ENCODE measurements at regions of chr14 and their contacts with region 1.

Region 1: DNA sequence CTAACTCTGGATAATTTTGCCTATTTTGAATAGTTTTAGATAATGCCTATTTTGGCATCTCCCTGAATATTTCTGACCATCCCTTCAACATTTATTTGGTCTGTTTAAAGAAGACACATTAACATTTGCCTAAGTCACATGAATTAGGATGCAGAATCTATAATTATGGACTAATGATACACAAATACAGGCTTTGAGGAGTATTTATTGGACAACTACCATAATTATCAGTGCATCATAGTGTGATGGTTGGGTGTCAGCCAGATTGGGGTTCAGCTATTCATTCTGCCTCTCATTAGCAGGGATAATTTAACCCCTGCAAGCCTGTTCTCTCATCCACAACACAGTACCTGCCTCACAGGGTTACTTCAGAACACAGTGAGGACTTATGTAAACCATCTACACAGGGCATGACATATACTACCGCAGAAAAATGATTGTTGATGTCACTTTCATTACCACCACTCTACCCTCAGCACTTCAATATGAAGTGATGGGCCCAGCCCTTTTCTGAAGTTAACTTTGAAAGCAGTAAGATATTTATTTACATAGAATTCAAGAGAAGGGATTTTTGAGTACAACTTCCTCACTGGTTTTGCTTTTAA is 14.4 kb downstream of the PRKCH start:
- DNase-seq: no peak
- ATAC-seq: peak; percentile 63
- H3K4me3 Mint-ChIP-seq: peak overlapping the region; percentile 60
- H3K27ac Mint-ChIP-seq: peak overlapping the region; percentile 96
- H3K4me1 Mint-ChIP-seq: peaks cover 83% of the 10 kb centered on the region
- H3K27me3 Mint-ChIP-seq: no peaks in the 10 kb centered on the region
- CTCF ChIP-seq: no peak

Region 2: DNA sequence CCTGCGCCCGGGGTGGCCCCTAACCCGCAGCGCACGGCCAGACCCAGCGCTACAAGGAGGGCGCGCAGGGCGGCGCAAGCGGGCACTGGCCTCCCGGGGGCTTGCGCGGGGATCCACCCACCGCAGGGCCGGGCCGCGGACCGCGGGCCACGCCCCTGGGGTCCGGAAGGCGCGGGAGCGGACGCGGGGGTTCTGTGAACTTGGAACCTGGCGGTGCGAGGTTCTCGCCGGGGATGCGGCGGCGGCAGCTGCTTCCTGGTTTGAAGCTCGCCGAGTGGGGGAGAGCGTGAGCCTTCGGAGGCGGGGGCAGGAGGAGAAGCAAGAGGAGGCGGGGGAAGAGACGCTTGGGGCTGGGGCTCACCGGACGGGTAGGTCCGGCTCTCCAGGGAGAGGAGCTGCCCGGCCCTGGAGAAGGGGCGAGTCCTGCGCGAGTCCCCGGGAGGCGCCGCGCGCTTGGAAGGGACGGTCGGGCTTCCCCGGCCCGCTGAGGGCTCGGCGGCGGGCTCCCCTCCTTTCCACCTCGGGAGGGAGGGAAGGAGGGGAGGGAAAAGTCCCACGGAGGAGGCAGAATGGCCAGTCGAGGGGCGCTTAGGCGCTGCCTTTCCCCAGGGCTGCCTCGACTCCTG is 14.3 kb before region 1 on chr14 and contains the start of gene PRKCH:
- CTCF ChIA-PET with region 1: interaction called, 14 read pairs
- POLR2A ChIA-PET with region 1: interaction called, 54 read pairs
- intact Hi-C with region 1: no loop called
- DNase-seq: peak; percentile 90
- ATAC-seq: peak; percentile 72
- H3K4me3 Mint-ChIP-seq: peak within 1 kb of the TSS; percentile 99
- H3K27ac Mint-ChIP-seq: peak within 1 kb of the TSS; percentile 93
- H3K4me1 Mint-ChIP-seq: peaks cover 22% of the 10 kb centered on the region
- H3K27me3 Mint-ChIP-seq: no peaks in the 10 kb centered on the region
- CTCF ChIP-seq: no peak
- total RNA-seq, gene PRKCH: 193 to 194 TPM

Region 3: DNA sequence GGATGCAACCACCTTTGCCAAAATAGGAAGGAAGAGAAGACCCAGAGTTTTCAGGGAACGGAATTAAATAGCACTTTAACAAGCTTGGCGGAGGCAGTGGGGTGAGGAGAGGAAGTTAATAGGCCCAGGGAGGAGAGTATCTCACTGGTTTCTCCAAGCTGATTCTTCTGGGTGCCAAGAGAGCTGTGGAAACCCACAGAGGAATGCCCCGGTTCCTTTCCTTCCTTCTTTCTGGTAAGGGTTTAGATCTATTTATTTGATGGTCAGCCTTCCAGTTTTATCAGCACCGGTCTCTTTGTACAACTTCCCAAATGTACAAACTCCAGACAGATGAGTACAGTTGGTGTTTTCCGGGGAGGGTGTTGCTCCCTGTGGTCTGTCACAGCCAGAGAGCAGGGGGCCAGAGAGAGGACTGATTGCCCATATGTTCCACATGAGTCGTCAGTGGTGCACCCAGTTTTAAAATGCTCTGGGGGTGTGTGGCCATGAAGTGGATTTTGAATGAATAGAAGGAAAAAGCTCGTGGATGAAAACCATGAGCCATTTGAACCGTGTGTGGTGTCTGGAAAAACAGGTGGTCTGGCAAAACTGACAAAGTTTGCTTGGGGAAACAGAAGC is 12.2 kb after region 1 on chr14:
- CTCF ChIA-PET with region 1: interaction called, 32 read pairs
- POLR2A ChIA-PET with region 1: interaction called, 116 read pairs
- intact Hi-C with region 1: loop called (anchors 2 kb)
- DNase-seq: peak; percentile 66
- ATAC-seq: peak; percentile 21
- H3K4me3 Mint-ChIP-seq: peak overlapping the region; percentile 80
- H3K27ac Mint-ChIP-seq: peak overlapping the region; percentile 98
- H3K4me1 Mint-ChIP-seq: peaks cover 96% of the 10 kb centered on the region
- H3K27me3 Mint-ChIP-seq: no peaks in the 10 kb centered on the region
- CTCF ChIP-seq: no peak

Region 4: GRCh38 chr14:61438860-61439684 is 103.3 kb after region 1 on chr14:
- CTCF ChIA-PET with region 1: no interaction called
- POLR2A ChIA-PET with region 1: interaction called, 14 read pairs
- intact Hi-C with region 1: no loop called
- DNase-seq: peak; percentile 66
- ATAC-seq: peak; percentile 41
- H3K4me3 Mint-ChIP-seq: peak overlapping the region; percentile 72
- H3K27ac Mint-ChIP-seq: peak overlapping the region; percentile 90
- H3K4me1 Mint-ChIP-seq: peaks cover 92% of the 10 kb centered on the region
- H3K27me3 Mint-ChIP-seq: no peaks in the 10 kb centered on the region
- CTCF ChIP-seq: no peak

Region 5: DNA sequence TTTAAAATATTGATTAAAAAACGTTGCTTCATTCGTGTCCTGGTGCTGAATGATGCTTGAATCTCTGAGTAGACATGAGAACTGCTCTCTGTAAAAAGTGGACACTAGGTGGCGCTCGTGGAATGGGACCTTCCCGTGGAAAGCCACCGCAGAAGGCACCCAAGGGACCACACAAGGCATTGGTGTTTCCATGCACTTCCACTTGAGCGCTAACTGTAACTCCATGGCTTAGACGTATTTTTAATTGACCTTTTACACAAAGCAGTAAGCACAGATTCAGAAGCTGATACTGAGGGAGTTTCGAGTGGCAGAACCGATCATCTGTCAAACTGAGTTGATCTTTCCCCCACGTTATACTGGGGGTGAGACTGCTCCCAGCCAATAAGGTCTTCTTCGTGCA is 120.9 kb after region 1 on chr14:
- CTCF ChIA-PET with region 1: interaction called, 3 read pairs
- POLR2A ChIA-PET with region 1: interaction called, 12 read pairs
- intact Hi-C with region 1: no loop called
- DNase-seq: peak; percentile 92
- ATAC-seq: no peak
- H3K4me3 Mint-ChIP-seq: no peak overlapping the region
- H3K27ac Mint-ChIP-seq: peak overlapping the region; percentile 84
- H3K4me1 Mint-ChIP-seq: peaks cover 82% of the 10 kb centered on the region
- H3K27me3 Mint-ChIP-seq: no peaks in the 10 kb centered on the region
- CTCF ChIP-seq: peak; percentile 92

Measured in activated CD8-positive, alpha-beta T cell treated with anti-CD3 and anti-CD28 coated beads for 36 hours (primary cell).